PC-9 (cell line): ENCODE measurements at regions of chr2 and their contacts with region 1.

Region 1: DNA sequence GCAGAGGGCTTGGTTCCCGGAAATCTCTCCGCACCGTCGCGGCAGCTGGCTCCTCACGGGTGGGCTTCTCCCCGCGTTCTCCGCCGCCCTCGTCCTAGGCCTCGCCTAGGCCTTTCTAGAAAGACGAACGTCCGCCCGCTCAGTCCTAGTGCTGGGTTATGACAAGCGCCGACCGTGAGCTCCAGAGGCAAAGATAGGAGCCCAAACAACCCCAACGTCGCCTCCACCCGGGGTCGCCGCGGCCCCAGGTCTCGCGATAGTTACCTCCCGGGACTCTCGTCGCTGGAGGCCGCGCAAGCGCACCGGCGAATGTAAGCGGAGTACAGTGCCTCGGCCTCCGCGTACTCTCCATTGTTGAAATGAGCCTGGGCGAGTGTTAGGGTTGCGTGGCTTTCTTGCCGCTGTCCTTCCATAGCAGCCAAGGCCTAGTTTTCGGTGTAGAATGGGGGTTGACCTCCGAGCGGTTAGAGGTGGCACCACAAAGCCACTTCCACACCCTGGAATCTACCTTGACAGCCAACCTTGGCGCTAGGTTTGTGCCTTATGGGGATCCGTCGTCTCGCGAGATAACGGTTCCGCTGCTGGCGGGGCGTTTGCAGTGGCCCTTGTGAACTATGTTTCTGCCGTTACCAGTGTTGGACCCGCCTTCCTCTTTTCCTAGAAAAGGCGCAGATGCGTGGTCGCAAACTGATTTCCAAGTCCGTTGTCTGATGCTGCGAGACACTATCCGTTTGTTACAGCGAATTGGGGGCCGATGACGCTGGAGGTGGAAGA is at the start of gene TTC32:
- DNase-seq: peak; percentile 84 to 91
- H3K4me3 ChIP-seq: peak within 1 kb of the TSS; percentile 74
- H3K27ac ChIP-seq: peak within 1 kb of the TSS; percentile 88
- H3K4me1 ChIP-seq: peaks cover 41% of the 10 kb centered on the region
- H3K27me3 ChIP-seq: no peaks in the 10 kb centered on the region
- CTCF ChIP-seq: no peak
- total RNA-seq, gene TTC32: 27.9 and 36.2 TPM in 2 replicates

Region 2: DNA sequence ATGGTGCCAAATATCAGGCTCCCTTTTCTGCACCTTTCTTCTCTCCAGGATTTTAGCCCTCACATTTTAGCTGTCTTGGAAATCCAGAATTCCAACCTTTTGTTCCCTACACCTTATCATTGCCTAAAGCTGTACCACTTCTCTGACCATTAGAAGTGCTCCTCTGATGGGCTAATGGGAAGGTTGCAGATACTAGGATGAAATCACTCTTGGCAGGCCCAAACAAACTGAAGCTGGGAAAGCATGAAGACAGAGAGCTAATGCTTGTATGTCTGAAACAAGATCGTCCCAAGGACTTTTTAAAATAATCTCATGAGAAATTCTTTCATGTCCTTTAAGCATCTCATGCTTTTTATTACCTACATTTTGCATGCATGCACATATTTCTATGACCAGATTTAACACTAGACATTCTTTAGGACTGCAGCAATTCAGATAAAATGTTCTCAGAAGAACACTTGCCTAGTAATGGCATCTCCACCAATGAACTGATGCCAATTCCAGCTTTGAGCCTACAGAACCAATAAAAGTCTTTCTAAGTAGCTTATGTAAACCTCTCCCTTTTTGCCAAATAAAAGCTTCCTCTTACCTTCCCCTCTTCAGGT is 444.8 kb before region 1 on chr2:
- CTCF ChIA-PET with region 1: no interaction called
- POLR2A ChIA-PET with region 1: interaction called, 13 read pairs
- intact Hi-C with region 1: no loop called
- DNase-seq: no peak
- H3K4me3 ChIP-seq: no peak overlapping the region
- H3K27ac ChIP-seq: no peak overlapping the region
- H3K4me1 ChIP-seq: no peaks in the 10 kb centered on the region
- H3K27me3 ChIP-seq: no peaks in the 10 kb centered on the region
- CTCF ChIP-seq: no peak

Region 3: GRCh38 chr2:19955544-19956422 is 54.2 kb after region 1 on chr2:
- CTCF ChIA-PET with region 1: no interaction called
- POLR2A ChIA-PET with region 1: no interaction called
- intact Hi-C with region 1: loop called (anchors 5 kb)
- DNase-seq: peak; percentile 57 to 69
- H3K4me3 ChIP-seq: no peak overlapping the region
- H3K27ac ChIP-seq: no peak overlapping the region
- H3K4me1 ChIP-seq: no peaks in the 10 kb centered on the region
- H3K27me3 ChIP-seq: no peaks in the 10 kb centered on the region
- CTCF ChIP-seq: peak; percentile 91

Region 4: GRCh38 chr2:20781656-20782265 is 880.1 kb after region 1 on chr2:
- CTCF ChIA-PET with region 1: no interaction called
- POLR2A ChIA-PET with region 1: no interaction called
- intact Hi-C with region 1: no loop called
- DNase-seq: no peak
- H3K4me3 ChIP-seq: no peak overlapping the region
- H3K27ac ChIP-seq: no peak overlapping the region
- H3K4me1 ChIP-seq: 0 out of 2 replicates have a peak, but pooled peaks cover 7% of the 10 kb centered on the region
- H3K27me3 ChIP-seq: no peaks in the 10 kb centered on the region
- CTCF ChIP-seq: peak; percentile 77